Sigmoid colon (tissue), 7 donors: ENCODE measurements at regions of chr20 and their contacts with region 1.

Region 1: DNA sequence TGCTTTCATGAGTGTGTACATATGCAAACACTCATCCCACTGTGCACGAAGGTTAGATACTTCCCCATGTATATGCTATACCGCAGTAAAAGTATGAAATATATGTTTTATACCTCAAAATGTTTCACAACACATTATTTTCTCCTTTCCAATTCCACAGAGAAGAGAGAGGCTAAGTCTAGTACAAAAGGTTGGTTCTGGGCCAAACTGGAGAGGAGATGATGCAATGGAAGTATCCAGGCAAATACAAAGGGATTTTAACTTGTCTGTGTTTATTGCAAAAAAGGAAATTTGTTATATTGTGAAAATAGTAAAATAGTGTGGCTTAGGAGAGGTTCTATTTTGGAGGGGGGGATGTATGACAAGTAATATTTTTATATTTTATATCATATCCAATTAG is 112.6 kb downstream of the PLCB1 start:
- DNase-seq: peak; percentile 76
- H3K4me3 ChIP-seq: no peak overlapping the region
- H3K27ac ChIP-seq: peak overlapping the region; percentile 23 to 65 (median 50)
- H3K4me1 ChIP-seq: peaks cover 0 to 47% (median 34%) of the 10 kb centered on the region in 4 donors
- H3K27me3 ChIP-seq: no peaks in the 10 kb centered on the region
- CTCF ChIP-seq: no peak
- EP300 ChIP-seq: no peak
- POLR2A ChIP-seq: no peak

Region 2: DNA sequence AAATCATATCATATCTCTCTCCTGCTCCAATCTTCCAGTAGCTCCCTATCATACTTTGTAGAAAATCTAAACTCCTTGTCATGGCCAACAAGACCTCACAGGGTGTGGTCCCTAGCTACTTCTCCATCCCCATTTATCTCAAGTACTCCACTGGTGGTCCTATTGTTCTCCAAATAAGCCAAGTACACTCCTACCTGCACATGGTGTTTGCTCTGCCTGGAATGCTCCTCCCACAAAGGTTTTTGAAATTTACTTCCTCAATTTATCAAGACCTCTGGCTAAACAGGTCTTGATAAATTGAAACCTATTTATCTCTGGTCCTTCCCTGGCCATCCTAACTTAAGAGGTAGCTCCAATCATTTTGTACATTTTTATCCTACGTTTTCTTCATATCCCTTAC is 237.1 kb before region 1 on chr20:
- intact Hi-C with region 1: no loop called
- DNase-seq: no peak
- H3K4me3 ChIP-seq: no peak overlapping the region
- H3K27ac ChIP-seq: no peak overlapping the region
- H3K4me1 ChIP-seq: peaks cover 0 to 14% (median 3%) of the 10 kb centered on the region in 4 donors
- H3K27me3 ChIP-seq: no peaks in the 10 kb centered on the region
- CTCF ChIP-seq: no peak
- EP300 ChIP-seq: no peak
- POLR2A ChIP-seq: no peak

Region 3: DNA sequence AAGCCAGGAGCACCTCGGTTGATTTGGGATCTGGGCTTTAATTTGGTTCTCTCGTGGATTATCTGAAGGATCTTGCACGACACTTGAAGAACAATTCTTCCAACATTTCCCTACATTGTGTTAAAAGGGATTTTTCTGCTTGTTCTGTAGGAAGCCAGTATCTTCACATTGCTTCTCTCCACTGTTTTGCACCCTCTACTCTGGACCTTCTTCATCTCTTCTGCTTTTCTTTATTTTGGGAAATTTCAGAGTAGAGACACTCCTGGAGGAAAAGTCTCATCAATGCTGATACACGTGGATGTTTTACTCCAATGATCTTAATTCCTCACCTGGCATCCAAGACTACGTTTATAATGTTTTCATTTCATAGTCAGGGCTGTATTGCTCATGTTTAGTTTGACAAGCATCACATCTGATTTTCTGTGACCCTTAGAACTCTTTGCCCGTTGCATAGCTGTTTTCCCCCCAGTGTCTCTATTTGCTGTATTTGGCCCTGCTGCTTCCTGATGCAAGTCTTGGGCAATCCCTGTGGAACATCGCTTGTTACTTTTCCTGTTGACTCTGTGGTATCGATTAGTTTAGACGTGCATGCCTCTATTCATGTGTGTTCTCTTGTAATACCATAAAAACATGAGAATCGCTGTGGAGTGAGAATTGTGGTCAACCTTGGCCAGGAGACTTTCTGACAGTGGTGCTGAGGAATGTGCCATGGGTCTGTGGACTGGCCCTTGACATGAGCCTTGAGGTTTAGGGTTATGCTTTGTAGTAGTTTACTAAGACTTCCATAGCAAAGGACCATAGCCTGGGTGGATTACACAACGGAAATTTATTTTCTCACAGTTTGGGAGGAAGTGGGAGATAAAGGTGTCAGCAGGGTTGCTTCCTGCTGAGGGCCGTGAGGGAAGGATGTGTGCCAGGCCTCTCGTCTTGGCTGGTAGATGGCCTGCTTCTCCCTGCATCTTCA is 100.1 kb before region 1 on chr20:
- intact Hi-C with region 1: loop called (anchors 5 kb)
- DNase-seq: no peak
- H3K4me3 ChIP-seq: no peak overlapping the region
- H3K27ac ChIP-seq: no peak overlapping the region
- H3K4me1 ChIP-seq: peaks cover 0 to 46% (median 31%) of the 10 kb centered on the region in 4 donors
- H3K27me3 ChIP-seq: no peaks in the 10 kb centered on the region
- CTCF ChIP-seq: no peak
- EP300 ChIP-seq: no peak
- POLR2A ChIP-seq: no peak